Caco-2 (cell line): ENCODE measurements at regions of chr3 and their contacts with region 1.

Region 1: GRCh38 chr3:103794656-103795055 is 1359.8 kb downstream of the ZPLD1 start:
- DNase-seq: peak in 1 of 2 experiments; percentile 2
- H3K4me3 ChIP-seq: no peak overlapping the region
- H3K4me3 Mint-ChIP-seq: no peak overlapping the region
- H3K27ac Mint-ChIP-seq: no peak overlapping the region
- H3K4me1 ChIP-seq: no peaks in the 10 kb centered on the region
- H3K4me1 Mint-ChIP-seq: no peaks in the 10 kb centered on the region
- H3K27me3 ChIP-seq: no peaks in the 10 kb centered on the region
- H3K27me3 Mint-ChIP-seq: no peaks in the 10 kb centered on the region
- CTCF ChIP-seq: peak; percentile 15 to 58

Region 2: DNA sequence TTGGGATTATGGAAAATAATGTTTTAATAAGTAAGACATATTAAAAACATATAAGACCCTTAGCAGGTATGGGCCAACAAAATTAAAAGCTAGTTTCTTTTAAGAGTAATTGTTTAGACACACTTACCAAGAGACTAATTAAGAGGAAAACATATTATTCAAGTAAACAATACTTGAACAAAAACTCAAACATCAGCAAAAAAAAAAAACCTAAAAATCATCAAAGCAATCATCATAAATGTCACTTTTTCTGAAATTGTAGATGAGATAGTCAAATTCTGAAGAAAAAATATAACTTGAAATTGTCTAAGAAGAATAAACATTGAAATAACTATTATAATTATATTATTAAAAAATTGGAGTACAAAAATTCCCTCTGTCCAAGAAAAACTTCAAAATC is 41.7 kb before region 1 on chr3:
- CTCF ChIA-PET with region 1: no interaction called
- POLR2A ChIA-PET with region 1: no interaction called
- intact Hi-C with region 1: no loop called
- DNase-seq: no peak
- H3K4me3 ChIP-seq: no peak overlapping the region
- H3K4me3 Mint-ChIP-seq: no peak overlapping the region
- H3K27ac Mint-ChIP-seq: no peak overlapping the region
- H3K4me1 ChIP-seq: no peaks in the 10 kb centered on the region
- H3K4me1 Mint-ChIP-seq: no peaks in the 10 kb centered on the region
- H3K27me3 ChIP-seq: no peaks in the 10 kb centered on the region
- H3K27me3 Mint-ChIP-seq: no peaks in the 10 kb centered on the region
- CTCF ChIP-seq: no peak

Region 3: DNA sequence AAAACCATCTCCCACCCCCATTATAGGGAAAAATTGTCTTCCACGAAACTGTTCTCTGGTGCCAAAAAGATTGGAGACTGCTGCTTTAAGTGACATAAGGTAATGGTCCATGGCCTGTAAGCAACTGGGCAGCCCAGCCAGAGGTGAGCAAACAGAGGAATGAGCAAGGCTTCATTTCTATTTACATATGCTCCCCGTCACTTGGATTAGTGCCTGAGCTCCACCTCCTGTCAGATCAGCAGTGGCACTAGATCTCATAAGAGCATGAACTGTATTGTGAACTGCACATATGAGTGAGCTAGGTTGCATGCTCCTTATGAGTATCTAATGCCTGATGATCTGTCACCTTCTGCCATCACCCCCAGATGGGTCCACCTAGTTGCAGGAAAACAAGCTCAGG is 412.3 kb after region 1 on chr3:
- CTCF ChIA-PET with region 1: no interaction called
- POLR2A ChIA-PET with region 1: no interaction called
- intact Hi-C with region 1: loop called (anchors 1 kb)
- DNase-seq: peak; percentile 11 to 35
- H3K4me3 ChIP-seq: no peak overlapping the region
- H3K4me3 Mint-ChIP-seq: no peak overlapping the region
- H3K27ac Mint-ChIP-seq: no peak overlapping the region
- H3K4me1 ChIP-seq: no peaks in the 10 kb centered on the region
- H3K4me1 Mint-ChIP-seq: no peaks in the 10 kb centered on the region
- H3K27me3 ChIP-seq: no peaks in the 10 kb centered on the region
- H3K27me3 Mint-ChIP-seq: no peaks in the 10 kb centered on the region
- CTCF ChIP-seq: peak in 1 of 2 experiments; percentile 26

Region 4: GRCh38 chr3:104214277-104214676 is 419.6 kb after region 1 on chr3:
- CTCF ChIA-PET with region 1: no interaction called
- POLR2A ChIA-PET with region 1: no interaction called
- intact Hi-C with region 1: loop called (anchors 2 kb)
- DNase-seq: no peak
- H3K4me3 ChIP-seq: no peak overlapping the region
- H3K4me3 Mint-ChIP-seq: no peak overlapping the region
- H3K27ac Mint-ChIP-seq: no peak overlapping the region
- H3K4me1 ChIP-seq: no peaks in the 10 kb centered on the region
- H3K4me1 Mint-ChIP-seq: no peaks in the 10 kb centered on the region
- H3K27me3 ChIP-seq: no peaks in the 10 kb centered on the region
- H3K27me3 Mint-ChIP-seq: no peaks in the 10 kb centered on the region
- CTCF ChIP-seq: no peak

Region 5: DNA sequence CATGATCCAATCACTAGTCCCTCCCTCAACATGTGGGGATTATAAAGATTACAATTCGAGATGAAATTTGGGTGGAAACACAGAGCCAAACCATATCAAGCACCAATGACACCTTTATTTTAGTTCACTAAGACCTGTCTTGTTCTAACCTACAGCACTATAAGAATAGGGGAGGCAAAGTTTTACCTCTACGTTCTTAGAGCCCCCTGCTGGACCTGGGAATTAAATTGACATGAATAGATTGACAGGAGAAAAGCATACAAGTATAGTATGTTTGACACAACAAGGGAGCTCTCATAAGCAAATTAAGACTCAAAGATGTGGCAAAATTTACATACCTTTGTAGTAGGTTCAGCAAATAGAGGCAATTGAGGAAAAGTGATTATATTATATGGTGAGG is 597.7 kb after region 1 on chr3:
- CTCF ChIA-PET with region 1: no interaction called
- POLR2A ChIA-PET with region 1: no interaction called
- intact Hi-C with region 1: loop called (anchors 2 kb)
- DNase-seq: peak in 1 of 2 experiments; percentile 12
- H3K4me3 ChIP-seq: no peak overlapping the region
- H3K4me3 Mint-ChIP-seq: no peak overlapping the region
- H3K27ac Mint-ChIP-seq: no peak overlapping the region
- H3K4me1 ChIP-seq: no peaks in the 10 kb centered on the region
- H3K4me1 Mint-ChIP-seq: no peaks in the 10 kb centered on the region
- H3K27me3 ChIP-seq: no peaks in the 10 kb centered on the region
- H3K27me3 Mint-ChIP-seq: no peaks in the 10 kb centered on the region
- CTCF ChIP-seq: no peak

Region 6: GRCh38 chr3:104460477-104461406 is 666.1 kb after region 1 on chr3:
- CTCF ChIA-PET with region 1: no interaction called
- POLR2A ChIA-PET with region 1: no interaction called
- intact Hi-C with region 1: loop called (anchors 1 kb)
- DNase-seq: peak in 1 of 2 experiments; percentile 3
- H3K4me3 ChIP-seq: no peak overlapping the region
- H3K4me3 Mint-ChIP-seq: no peak overlapping the region
- H3K27ac Mint-ChIP-seq: no peak overlapping the region
- H3K4me1 ChIP-seq: no peaks in the 10 kb centered on the region
- H3K4me1 Mint-ChIP-seq: no peaks in the 10 kb centered on the region
- H3K27me3 ChIP-seq: no peaks in the 10 kb centered on the region
- H3K27me3 Mint-ChIP-seq: no peaks in the 10 kb centered on the region
- CTCF ChIP-seq: peak in 1 of 2 experiments; percentile 20